Stomach (tissue), 19 donors: ENCODE measurements at regions of chr5 and their contacts with region 1.

Region 1: GRCh38 chr5:130171699-130172098 is 267.4 kb downstream of the CHSY3 start:
- DNase-seq: no peak
- H3K4me3 ChIP-seq: no peak overlapping the region
- H3K27ac ChIP-seq: no peak overlapping the region
- H3K4me1 ChIP-seq: no peaks in the 10 kb centered on the region
- H3K27me3 ChIP-seq: no peaks in the 10 kb centered on the region
- CTCF ChIP-seq: no peak
- EP300 ChIP-seq: no peak
- POLR2A ChIP-seq: no peak

Region 2: GRCh38 chr5:130568791-130569190 is 397.1 kb after region 1 on chr5:
- intact Hi-C with region 1: loop called (anchors 10 kb)
- DNase-seq: no peak
- H3K4me3 ChIP-seq: no peak overlapping the region
- H3K27ac ChIP-seq: no peak overlapping the region
- H3K4me1 ChIP-seq: no peaks in the 10 kb centered on the region
- H3K27me3 ChIP-seq: no peaks in the 10 kb centered on the region
- CTCF ChIP-seq: no peak
- EP300 ChIP-seq: no peak
- POLR2A ChIP-seq: no peak